Right ventricle myocardium inferior (tissue), 1 donor: ENCODE measurements at regions of chr17 and their contacts with region 1.

Region 1: DNA sequence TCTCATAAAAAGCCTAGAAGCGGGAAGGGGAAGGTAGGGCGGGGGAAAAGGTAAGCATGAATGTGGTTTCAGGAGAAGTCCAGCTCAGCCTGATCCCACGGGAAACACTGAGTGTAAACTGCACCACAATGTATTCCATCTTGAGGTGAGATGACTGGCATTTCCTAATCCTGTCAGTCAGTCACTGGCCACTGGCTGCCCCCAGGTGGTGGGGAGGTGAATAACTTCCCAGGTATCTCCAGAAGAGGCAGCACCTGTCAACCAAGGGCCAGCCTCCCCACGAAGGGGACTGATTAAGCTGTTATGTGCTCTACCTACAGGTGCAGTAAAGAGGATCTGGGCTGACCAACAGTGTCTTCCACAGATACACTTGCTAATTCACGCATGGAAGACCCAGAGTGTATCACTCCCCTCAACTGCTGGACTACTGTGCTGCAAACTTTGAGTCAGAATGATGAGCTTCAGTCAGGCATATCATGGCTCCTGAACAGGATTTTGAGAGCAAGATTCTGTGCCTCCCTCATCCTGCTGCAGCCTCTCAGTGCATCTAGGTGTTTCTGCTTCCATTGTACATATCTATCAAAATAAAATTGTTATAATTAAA is 108.5 kb upstream of the CCL2 start:
- DNase-seq: peak; percentile 63
- ATAC-seq: peak; percentile 59

Region 2: GRCh38 chr17:33779225-33779591 is 367.3 kb before region 1 on chr17:
- intact Hi-C with region 1: loop called (anchors 2 kb)
- DNase-seq: no peak
- ATAC-seq: no peak

Region 3: DNA sequence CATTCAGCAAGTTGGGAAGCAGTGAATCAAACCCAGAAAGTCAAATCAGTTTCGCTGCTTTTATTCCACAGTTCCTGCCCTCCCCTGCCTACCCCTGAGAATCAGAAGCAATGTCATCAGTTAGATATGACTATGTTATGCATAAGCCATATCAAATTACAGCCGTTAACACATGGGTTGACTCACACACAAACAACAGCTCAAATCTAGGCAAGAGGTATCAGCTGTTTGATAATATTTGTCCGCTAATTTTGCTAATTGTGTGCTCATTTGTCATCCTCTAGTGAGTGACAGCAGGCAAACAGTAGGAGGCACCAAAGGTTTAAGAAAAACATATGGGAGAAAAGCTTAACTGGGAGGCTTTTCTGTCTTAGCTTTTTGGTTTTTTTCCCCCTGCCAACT is 218.8 kb before region 1 on chr17:
- intact Hi-C with region 1: loop called (anchors 1 kb)
- DNase-seq: no peak
- ATAC-seq: no peak

Region 4: GRCh38 chr17:34081269-34081668 is 65.3 kb before region 1 on chr17:
- intact Hi-C with region 1: loop called (anchors 5 kb)
- DNase-seq: no peak
- ATAC-seq: no peak

Region 5: GRCh38 chr17:34254651-34255380 is 108.3 kb after region 1 on chr17 and contains the start of gene CCL2:
- intact Hi-C with region 1: no loop called
- DNase-seq: peak; percentile 82
- ATAC-seq: peak; percentile 71
- total RNA-seq, gene CCL2: 33.4 TPM